Activated naive CD4-positive, alpha-beta T cell treated with anti-CD3 and anti-CD28 coated beads for 36 hours (primary cell): ENCODE measurements at regions of chr3 and their contacts with region 1.

Region 1: DNA sequence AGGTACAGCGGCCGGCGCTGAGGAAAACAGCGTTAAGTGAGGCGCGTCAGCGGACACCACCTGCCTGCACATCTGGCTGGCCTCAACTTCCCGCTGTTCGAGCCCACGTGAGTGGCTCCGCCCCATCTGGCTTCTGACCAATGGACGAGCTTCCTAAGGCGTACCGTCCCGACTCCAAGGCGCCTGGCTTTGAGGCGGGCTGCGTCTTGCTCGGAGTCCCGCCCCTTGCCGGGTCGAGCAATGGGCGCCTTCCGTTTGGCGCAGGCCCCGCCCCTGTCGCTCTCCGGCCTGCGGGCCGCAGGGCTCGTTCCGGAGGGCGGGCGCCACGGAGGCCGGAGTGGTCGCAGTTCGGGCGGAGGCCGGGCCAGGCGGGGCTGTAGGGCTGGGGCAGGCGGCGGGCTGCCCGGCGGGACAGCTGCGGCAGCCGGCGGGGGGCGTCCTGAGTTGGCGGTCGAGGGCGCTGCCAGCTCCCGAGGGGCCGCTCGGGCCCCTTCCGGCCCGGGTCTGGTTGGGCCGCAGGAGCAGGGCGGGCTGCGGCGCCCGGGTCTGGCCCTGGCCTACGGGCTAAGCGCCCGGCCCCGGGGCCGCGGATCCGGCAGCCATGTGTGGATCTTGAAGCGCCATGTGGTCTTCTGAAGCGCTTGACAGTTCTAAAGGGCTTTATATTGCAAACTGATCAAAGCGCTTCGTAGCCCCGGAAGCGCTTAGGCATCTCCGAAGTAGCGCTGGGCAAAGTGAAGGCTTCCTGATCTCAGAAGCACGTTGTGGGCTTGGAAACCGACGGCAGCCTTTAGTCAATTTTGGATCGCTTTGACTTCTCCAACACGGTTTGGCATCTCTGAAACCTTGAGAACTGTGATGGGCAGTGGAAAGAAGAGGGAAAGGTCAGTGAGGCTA is at the start of gene TATDN2:
- DNase-seq: peak; percentile 98
- H3K4me3 Mint-ChIP-seq: peak within 1 kb of the TSS; percentile 89
- H3K27ac Mint-ChIP-seq: peak within 1 kb of the TSS; percentile 92
- H3K4me1 Mint-ChIP-seq: peaks cover 55% of the 10 kb centered on the region
- H3K27me3 Mint-ChIP-seq: no peaks in the 10 kb centered on the region
- total RNA-seq, gene TATDN2: 25.8 to 28.1 TPM

Region 2: GRCh38 chr3:9792405-9793160 is 455.8 kb before region 1 on chr3 and contains the starts of genes ARPC4 and TADA3:
- CTCF ChIA-PET with region 1: no interaction called
- intact Hi-C with region 1: loop called (anchors 1 kb)
- DNase-seq: peak; percentile 94
- H3K4me3 Mint-ChIP-seq: peak within 1 kb of the TSS; percentile 94
- H3K27ac Mint-ChIP-seq: peak within 1 kb of the TSS; percentile 100
- H3K4me1 Mint-ChIP-seq: peaks cover 67% of the 10 kb centered on the region
- H3K27me3 Mint-ChIP-seq: no peaks in the 10 kb centered on the region
- total RNA-seq, gene ARPC4: 141 to 144 TPM
- total RNA-seq, gene TADA3: 62.4 to 67.6 TPM

Region 3: GRCh38 chr3:9916734-9917680 is 331.4 kb before region 1 on chr3 and contains the start of gene IL17RC:
- CTCF ChIA-PET with region 1: no interaction called
- intact Hi-C with region 1: no loop called
- DNase-seq: peak; percentile 67
- H3K4me3 Mint-ChIP-seq: peak within 1 kb of the TSS; percentile 71
- H3K27ac Mint-ChIP-seq: no peak within 1 kb of the TSS
- H3K4me1 Mint-ChIP-seq: peaks cover 13% of the 10 kb centered on the region
- H3K27me3 Mint-ChIP-seq: peaks cover 2% of the 10 kb centered on the region
- total RNA-seq, gene IL17RC: 0.21 to 0.44 TPM

Region 4: DNA sequence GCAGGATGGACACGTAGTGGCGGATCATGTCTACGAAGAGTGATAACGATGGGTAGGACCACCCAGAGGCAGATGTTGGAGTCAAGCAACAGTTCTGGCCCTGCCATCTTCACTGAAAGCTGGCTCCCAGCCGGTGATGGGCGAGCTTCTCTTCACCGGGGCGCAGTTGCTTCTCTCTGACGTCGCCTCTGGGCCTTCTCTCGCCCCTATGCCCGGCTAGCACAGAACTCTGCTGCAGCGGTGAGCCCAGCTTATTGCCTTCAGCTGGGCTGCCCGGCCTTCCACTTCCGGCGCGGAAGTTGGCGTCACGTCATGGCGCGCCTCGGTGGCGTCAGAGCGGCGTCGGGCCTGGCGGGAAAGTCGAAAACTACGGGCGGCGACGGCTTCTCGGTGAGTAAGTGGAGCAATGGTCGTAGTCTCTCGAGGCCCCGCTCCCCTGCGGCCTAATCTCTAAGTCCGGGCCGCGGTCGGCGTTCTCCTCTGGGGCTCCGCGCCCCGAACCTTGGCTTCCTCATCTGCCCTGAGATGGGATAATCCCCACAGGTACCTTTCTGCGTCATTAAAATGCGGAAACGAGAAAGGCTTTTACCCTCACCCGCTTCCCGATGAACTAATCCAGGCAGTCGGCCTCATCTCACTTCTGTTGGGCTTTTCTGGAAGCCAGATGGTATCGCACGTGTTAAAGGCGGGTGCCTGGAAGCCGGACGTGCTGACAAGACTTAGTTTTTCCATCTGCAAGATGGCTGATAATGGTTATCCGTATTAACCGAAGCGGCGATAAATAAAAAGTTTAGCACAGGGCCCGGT is 222.1 kb before region 1 on chr3 and contains the start of gene FANCD2:
- CTCF ChIA-PET with region 1: no interaction called
- intact Hi-C with region 1: loop called (anchors 1 kb)
- DNase-seq: peak; percentile 94
- H3K4me3 Mint-ChIP-seq: peak within 1 kb of the TSS; percentile 92
- H3K27ac Mint-ChIP-seq: peak within 1 kb of the TSS; percentile 98
- H3K4me1 Mint-ChIP-seq: peaks cover 22% of the 10 kb centered on the region
- H3K27me3 Mint-ChIP-seq: no peaks in the 10 kb centered on the region
- total RNA-seq, gene FANCD2: 86.3 to 90.8 TPM

Region 5: DNA sequence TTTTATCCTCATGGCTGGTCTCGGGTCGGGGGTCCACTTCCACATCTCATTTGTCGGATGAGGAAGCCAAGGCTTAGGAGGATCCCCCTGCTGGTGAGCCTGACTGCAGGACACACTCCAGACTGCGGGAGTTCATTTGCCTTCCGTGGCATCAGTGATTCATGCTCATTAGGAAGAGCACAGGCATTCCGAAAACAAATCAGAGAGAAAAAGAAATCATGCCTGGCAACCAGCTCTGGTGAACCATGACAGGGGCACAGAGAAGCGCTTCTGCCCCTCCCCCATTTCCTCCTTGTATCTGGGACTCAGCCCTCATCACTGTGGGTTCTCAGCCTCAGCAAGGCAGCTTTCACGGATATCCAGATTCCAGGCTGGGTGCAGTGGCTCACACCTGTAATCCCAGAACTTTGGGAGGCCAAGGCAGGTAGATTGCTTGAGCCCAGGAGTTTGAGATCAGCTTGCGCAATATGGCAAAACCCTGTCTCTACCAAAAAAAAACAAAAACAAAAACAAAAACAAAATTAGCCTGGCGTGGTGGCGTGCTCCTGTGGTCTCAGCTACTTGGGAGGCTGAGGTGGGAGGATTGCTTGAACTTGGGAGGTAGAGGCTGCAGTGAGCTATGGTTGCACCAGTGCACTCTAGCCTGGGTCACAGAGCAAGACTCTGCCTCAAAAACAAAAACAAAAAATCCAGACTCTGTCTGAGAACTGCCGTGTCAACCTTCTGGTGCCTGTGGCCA is 55.3 kb before region 1 on chr3:
- CTCF ChIA-PET with region 1: interaction called, 5 read pairs
- intact Hi-C with region 1: loop called (anchors 1 kb)
- DNase-seq: peak; percentile 93
- H3K4me3 Mint-ChIP-seq: peak overlapping the region; percentile 42
- H3K27ac Mint-ChIP-seq: peak overlapping the region; percentile 96
- H3K4me1 Mint-ChIP-seq: peaks cover 85% of the 10 kb centered on the region
- H3K27me3 Mint-ChIP-seq: no peaks in the 10 kb centered on the region

Region 6: GRCh38 chr3:10205451-10206165 is 42.8 kb before region 1 on chr3:
- CTCF ChIA-PET with region 1: no interaction called
- intact Hi-C with region 1: no loop called
- DNase-seq: no peak
- H3K4me3 Mint-ChIP-seq: no peak overlapping the region
- H3K27ac Mint-ChIP-seq: peak overlapping the region; percentile 7
- H3K4me1 Mint-ChIP-seq: peaks cover 29% of the 10 kb centered on the region
- H3K27me3 Mint-ChIP-seq: no peaks in the 10 kb centered on the region

Region 7: GRCh38 chr3:10263646-10264363 is 15.4 kb after region 1 on chr3:
- CTCF ChIA-PET with region 1: interaction called, 14 read pairs
- intact Hi-C with region 1: loop called (anchors 1 kb)
- DNase-seq: peak; percentile 81
- H3K4me3 Mint-ChIP-seq: peak overlapping the region; percentile 71
- H3K27ac Mint-ChIP-seq: peak overlapping the region; percentile 88
- H3K4me1 Mint-ChIP-seq: peaks cover 81% of the 10 kb centered on the region
- H3K27me3 Mint-ChIP-seq: no peaks in the 10 kb centered on the region

Region 8: GRCh38 chr3:10417849-10418248 is 169.4 kb after region 1 on chr3:
- CTCF ChIA-PET with region 1: no interaction called
- intact Hi-C with region 1: no loop called
- DNase-seq: peak; percentile 44
- H3K4me3 Mint-ChIP-seq: no peak overlapping the region
- H3K27ac Mint-ChIP-seq: no peak overlapping the region
- H3K4me1 Mint-ChIP-seq: peaks cover 8% of the 10 kb centered on the region
- H3K27me3 Mint-ChIP-seq: peaks cover 6% of the 10 kb centered on the region

Region 9: GRCh38 chr3:10437272-10437994 is 189.0 kb after region 1 on chr3:
- CTCF ChIA-PET with region 1: no interaction called
- intact Hi-C with region 1: loop called (anchors 1 kb)
- DNase-seq: peak; percentile 84
- H3K4me3 Mint-ChIP-seq: no peak overlapping the region
- H3K27ac Mint-ChIP-seq: peak overlapping the region; percentile 48
- H3K4me1 Mint-ChIP-seq: peaks cover 26% of the 10 kb centered on the region
- H3K27me3 Mint-ChIP-seq: no peaks in the 10 kb centered on the region